Activated CD8-positive, alpha-beta T cell treated with anti-CD3 and anti-CD28 coated beads, Interleukin-2, amount 10 ng/mL, durations not matched to agents 7 days and 5 days (primary cell): ENCODE measurements at regions of chr6 and their contacts with region 1.

Region 1: DNA sequence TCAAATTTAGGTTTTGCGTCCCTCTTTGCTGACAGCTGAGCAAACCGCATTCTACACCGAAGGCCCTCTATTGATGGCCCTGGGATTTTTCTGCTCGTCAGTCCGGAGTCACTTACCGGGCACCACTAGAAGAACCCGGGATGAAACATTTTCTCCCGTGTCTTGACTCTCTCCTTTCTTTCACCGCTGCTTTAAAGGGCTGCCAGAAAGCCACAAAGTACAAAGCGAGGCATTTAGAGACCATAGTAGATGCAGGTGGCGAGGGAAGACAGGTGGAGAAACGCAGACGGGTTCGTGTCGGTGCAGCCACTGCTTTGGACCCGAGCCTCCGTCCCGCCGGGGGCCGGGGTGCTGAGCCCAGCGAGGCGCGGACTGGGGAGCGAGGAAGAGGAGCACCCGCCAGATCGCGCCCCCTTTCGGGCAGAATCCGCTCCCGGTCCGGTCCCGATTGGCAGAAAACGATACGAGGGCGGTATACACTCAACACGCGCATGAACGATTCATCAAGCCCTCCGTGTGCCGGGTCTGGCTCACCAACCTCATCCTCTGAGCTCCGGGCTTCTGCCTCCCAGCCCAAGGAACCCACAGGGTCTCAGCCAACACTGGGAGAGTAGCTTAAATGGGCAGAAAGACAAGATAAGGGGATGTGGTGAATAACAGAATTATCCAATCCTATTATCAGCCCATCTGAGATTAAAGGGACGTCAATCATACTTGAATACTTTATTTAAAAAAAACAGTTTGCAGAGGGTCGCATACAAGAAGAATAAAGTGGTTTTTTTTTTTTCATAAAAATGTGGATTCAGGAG is 84.9 kb downstream of the TRIM27 start:
- DNase-seq: peak; percentile 88
- ATAC-seq: peak; percentile 88
- H3K4me3 Mint-ChIP-seq: peak overlapping the region; percentile 90
- H3K27ac Mint-ChIP-seq: peak overlapping the region; percentile 82
- H3K4me1 Mint-ChIP-seq: peaks cover 24% of the 10 kb centered on the region
- H3K27me3 Mint-ChIP-seq: peaks cover 24% of the 10 kb centered on the region

Region 2: GRCh38 chr6:28729501-28730402 is 109.1 kb before region 1 on chr6:
- CTCF ChIA-PET with region 1: interaction called, 10 read pairs
- POLR2A ChIA-PET with region 1: no interaction called
- DNase-seq: no peak
- ATAC-seq: no peak
- H3K4me3 Mint-ChIP-seq: peak overlapping the region; percentile 83
- H3K27ac Mint-ChIP-seq: peak overlapping the region; percentile 78
- H3K4me1 Mint-ChIP-seq: peaks cover 21% of the 10 kb centered on the region
- H3K27me3 Mint-ChIP-seq: peaks cover 59% of the 10 kb centered on the region

Region 3: DNA sequence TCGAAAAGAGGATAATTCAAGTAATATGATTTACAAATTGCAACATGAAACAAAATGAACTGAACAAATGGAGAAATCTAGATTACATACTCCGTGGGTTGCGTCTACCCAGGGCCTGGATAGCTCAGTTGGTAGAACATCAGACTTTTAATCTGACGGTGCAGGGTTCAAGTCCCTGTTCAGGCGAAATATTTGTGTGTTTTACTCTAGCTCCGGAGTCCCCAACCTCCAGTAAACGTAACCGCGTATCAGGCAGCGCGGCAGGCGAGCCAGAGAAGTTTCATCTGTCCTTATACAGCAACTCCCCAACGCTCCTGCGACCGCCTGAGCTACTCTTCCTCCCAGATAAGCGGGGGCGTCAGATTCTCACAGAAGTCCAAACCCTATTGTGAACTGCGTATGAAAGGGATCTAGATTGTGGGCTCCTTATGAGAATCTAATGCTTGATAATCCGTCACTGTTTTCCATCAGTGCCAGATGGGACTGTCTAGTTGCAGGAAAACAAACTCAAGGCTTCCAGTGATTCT is 91.1 kb before region 1 on chr6:
- CTCF ChIA-PET with region 1: no interaction called
- POLR2A ChIA-PET with region 1: no interaction called
- DNase-seq: no peak
- ATAC-seq: no peak
- H3K4me3 Mint-ChIP-seq: no peak overlapping the region
- H3K27ac Mint-ChIP-seq: no peak overlapping the region
- H3K4me1 Mint-ChIP-seq: no peaks in the 10 kb centered on the region
- H3K27me3 Mint-ChIP-seq: peaks cover 33% of the 10 kb centered on the region

Region 4: GRCh38 chr6:28880894-28881780 is 42.3 kb after region 1 on chr6:
- CTCF ChIA-PET with region 1: interaction called, 28 read pairs
- POLR2A ChIA-PET with region 1: interaction called, 4 read pairs
- DNase-seq: peak; percentile 76
- ATAC-seq: no peak
- H3K4me3 Mint-ChIP-seq: peak overlapping the region; percentile 74
- H3K27ac Mint-ChIP-seq: peak overlapping the region; percentile 73
- H3K4me1 Mint-ChIP-seq: peaks cover 45% of the 10 kb centered on the region
- H3K27me3 Mint-ChIP-seq: peaks cover 21% of the 10 kb centered on the region

Region 5: DNA sequence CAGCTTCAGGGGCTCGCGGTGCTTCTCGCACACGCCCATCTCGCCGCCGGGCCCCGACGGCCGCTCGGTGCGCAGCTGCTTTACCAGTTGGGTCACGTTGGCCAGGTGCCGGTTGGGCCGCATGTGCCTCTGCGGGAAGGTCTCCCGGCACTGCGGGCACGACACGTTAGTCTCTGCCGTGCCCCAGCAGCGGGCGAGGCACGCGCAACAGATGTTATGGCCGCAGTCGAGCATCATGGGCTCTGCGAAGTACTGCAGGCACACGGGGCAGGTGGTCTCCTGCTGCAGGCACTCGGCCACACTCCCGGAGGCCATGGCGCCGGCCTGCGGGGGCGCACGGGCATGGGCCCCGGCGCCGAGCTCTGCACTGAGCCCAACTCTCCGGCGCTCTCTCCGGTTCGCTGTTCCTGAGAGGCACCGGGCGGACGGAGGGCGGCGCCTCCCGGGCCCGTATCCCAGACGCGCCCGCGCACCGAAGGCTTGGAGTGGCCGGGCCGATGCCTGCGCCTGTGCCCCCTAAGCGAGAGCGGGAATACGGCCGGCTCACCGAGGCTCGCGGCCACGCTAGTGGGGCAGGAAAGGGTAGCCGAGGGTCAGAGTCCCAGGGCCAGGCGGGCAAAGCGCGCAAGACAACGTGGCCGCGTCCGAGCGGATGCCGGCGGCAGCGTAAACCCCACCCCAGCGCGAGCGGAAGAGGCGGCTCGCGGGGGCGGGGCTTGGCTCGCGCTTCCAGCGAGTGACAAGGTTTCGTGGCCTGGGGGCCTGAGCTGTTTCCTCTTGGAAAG is 84.7 kb after region 1 on chr6 and contains the start of gene TRIM27:
- CTCF ChIA-PET with region 1: interaction called, 25 read pairs
- POLR2A ChIA-PET with region 1: interaction called, 21 read pairs
- DNase-seq: peak; percentile 84
- ATAC-seq: peak; percentile 89
- H3K4me3 Mint-ChIP-seq: peak within 1 kb of the TSS; percentile 87
- H3K27ac Mint-ChIP-seq: peak within 1 kb of the TSS; percentile 95
- H3K4me1 Mint-ChIP-seq: peaks cover 39% of the 10 kb centered on the region
- H3K27me3 Mint-ChIP-seq: no peaks in the 10 kb centered on the region
- total RNA-seq, gene TRIM27: 58.3 to 60.1 TPM

Region 6: GRCh38 chr6:28981833-28982475 is 143.1 kb after region 1 on chr6:
- CTCF ChIA-PET with region 1: interaction called, 20 read pairs
- POLR2A ChIA-PET with region 1: no interaction called
- DNase-seq: peak; percentile 76
- ATAC-seq: peak; percentile 74
- H3K4me3 Mint-ChIP-seq: peak overlapping the region; percentile 90
- H3K27ac Mint-ChIP-seq: peak overlapping the region; percentile 91
- H3K4me1 Mint-ChIP-seq: peaks cover 60% of the 10 kb centered on the region
- H3K27me3 Mint-ChIP-seq: peaks cover 61% of the 10 kb centered on the region